Mucosa of descending colon (tissue), 3 donors: ENCODE measurements at regions of chr5 and their contacts with region 1.

Region 1: GRCh38 chr5:126339215-126339805 is 83.9 kb upstream of the GRAMD2B start:
- DNase-seq: peak in 1 of 3 donors; percentile 78
- ATAC-seq: peak; percentile 80
- H3K4me3 ChIP-seq: no peak overlapping the region
- H3K4me1 ChIP-seq: no peaks in the 10 kb centered on the region
- CTCF ChIP-seq: peak; percentile 72

Region 2: GRCh38 chr5:126544087-126544740 is 204.9 kb after region 1 on chr5:
- intact Hi-C with region 1: loop called in 1 of 2 experiments (anchors 5 kb)
- DNase-seq: peak in 2 of 3 donors; percentile 61 to 63
- ATAC-seq: peak; percentile 70
- H3K4me3 ChIP-seq: no peak overlapping the region
- H3K4me1 ChIP-seq: no peaks in the 10 kb centered on the region
- CTCF ChIP-seq: no peak